ENCODE measurements at regions of chr3 and their contacts with region 1.

Region 1: DNA sequence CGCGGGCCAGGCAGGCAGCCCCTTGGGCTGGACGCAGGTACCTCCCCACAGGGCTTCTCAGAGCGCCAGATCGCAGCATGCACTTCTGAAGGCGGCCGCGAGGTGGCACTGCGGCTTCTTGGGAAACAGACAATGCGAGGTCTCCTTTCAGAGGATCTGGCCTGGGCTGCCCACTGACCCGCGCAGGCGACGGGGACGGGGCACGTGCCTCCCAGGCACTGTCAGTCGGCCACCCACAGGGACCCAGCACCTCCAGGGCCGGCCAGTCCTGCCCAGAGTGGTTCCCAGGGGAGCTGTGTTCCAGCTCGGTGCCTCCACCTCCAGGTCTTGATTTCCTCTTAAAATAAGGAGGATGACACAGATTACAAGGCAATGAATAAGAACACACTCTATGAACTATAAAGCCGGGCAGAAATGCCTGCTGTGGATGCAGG is 24.4 kb upstream of the TXNRD3 start:
- DNase-seq: peak; percentile 91
- ATAC-seq: peak; percentile 96

Region 2: DNA sequence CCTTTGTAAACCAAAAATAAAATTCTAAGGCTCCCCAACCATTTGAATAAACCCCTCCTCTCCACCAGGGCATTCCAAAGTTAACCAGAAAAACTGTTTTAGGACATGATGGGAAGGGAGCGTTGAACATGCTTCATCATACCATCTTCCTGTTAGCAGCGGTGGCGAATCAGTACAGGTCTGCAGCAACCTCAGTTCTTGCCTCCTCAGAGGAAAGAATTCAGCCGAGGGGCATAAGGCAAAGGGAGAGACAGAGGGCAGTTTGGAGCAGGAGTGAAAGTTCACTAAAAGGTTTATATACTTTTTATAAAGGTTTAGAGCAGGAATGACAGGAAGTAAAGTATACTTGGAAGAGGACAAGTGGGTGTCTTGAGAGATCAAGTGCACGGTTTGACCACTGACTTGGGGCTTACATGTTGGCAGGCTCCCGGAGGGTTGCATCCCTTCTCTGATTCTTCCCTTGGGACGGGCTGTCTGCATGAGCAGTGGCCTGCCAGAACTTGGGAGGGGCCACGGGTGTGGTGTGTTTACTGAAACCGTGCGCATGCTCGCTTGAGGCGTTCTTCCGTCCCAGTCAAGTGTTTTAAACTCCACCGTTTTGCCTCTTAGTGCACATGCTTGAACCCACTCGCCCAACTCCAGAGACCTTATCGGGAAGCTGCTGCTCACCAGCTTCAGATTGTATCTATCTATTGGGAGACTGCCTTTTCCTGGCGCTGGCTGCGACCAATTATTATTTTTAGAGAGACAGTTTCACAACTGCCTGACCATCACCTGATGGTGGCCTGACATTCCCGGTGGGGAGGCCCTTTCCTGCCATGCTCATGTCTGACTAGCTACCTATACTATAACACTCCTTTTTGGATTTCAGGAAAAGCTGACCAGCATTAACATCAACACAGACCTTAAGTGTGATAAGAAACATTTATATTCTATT is 105.9 kb before region 1 on chr3:
- intact Hi-C with region 1: no loop called
- DNase-seq: peak; percentile 46
- ATAC-seq: peak; percentile 61

Region 3: GRCh38 chr3:126630020-126630419 is 49.3 kb before region 1 on chr3:
- intact Hi-C with region 1: no loop called
- DNase-seq: no peak
- ATAC-seq: no peak

Region 4: DNA sequence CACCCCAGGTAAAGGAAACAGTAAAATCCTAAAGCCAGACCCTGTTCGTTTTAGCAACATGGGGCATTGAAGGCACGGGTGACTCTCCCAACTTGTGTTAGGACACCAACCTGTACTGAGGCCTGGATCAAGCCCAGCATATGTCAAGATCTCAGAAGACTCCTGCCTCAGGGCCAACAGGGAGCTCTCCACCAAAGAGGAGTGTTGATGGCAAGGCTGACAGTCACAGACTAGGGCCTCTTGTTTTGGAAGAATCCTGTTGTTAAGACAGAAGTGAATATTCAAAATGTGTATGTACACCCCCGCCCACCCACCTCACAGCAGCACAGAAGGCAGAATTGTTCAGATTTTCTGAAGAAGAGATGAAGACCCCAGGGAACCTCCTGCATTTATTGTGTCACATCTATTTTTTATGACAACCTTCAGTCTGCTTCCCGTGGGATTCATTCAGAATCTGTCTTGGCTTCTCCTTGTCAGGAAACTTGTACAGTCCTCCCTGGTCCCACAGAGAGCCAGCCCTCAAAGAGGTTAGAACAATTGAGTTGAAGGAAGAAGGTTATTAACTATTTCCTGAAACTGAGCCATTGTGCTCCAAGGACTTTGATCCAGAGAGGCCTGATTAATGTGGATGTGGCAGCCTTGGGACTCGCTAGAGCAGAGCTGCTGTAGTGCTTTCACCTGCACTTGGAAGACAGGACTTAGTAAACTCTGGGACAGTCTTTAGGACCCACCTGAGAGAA is 241.9 kb after region 1 on chr3:
- intact Hi-C with region 1: no loop called
- DNase-seq: no peak
- ATAC-seq: no peak

Region 5: DNA sequence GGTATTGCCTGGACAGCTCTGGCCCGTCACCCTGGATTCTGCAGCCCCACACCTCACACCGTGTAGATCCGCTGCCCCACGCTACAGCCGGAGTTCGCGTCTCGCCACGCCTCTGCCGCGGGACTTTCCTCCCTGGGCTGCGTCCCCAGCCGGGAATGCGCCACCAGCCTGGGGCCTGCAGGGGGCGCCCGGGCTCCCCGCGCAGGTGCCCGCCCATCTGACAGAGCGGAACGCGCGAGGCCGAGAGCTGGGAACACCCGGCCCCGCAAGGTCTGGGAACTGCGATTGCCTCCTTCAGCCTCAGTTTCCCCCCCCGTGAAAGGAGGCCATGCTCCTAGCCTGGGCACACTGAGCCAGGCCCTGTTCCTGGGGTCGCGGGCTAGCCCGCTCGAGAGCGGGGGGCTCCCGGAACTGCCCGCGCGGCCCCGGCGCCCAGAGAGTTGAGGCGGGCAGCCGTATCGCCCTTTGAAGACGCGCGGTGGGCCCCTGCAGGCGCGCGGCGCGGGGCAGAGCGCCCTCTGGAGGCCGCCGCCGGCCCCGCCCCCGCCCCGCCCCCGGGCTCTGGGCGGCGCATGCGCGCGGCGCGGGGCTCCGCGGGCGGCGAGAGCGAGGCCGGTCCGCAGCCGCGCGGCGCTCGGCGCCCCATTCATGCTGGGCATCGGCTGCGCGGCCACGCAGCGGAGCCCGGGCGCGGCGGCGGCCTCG is 303.3 kb after region 1 on chr3 and contains the start of gene PLXNA1:
- intact Hi-C with region 1: loop called (anchors 5 kb)
- DNase-seq: peak; percentile 89
- ATAC-seq: peak; percentile 88
- total RNA-seq, gene PLXNA1: 23.2 TPM

Region 6: DNA sequence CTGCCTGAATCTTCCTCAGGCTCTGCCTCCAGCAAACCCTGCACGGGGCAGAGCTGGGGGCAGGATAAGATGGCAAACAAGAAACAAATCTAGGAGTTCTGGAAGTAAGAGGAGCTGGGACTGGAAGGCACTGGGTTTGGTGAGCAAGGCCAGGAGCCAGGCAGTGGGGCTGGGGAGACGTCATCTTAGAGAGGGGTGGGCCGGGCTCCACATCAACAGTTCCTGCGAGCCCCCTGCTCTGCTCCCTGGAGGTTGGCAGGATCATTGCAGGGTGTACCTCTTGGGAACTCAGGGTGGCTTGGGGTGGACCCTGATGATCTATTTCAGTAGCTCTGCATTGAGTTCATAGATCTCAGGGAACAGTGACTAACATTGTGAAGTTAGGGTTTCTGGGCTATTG is 426.3 kb after region 1 on chr3:
- intact Hi-C with region 1: no loop called
- DNase-seq: no peak
- ATAC-seq: no peak

Region 7: DNA sequence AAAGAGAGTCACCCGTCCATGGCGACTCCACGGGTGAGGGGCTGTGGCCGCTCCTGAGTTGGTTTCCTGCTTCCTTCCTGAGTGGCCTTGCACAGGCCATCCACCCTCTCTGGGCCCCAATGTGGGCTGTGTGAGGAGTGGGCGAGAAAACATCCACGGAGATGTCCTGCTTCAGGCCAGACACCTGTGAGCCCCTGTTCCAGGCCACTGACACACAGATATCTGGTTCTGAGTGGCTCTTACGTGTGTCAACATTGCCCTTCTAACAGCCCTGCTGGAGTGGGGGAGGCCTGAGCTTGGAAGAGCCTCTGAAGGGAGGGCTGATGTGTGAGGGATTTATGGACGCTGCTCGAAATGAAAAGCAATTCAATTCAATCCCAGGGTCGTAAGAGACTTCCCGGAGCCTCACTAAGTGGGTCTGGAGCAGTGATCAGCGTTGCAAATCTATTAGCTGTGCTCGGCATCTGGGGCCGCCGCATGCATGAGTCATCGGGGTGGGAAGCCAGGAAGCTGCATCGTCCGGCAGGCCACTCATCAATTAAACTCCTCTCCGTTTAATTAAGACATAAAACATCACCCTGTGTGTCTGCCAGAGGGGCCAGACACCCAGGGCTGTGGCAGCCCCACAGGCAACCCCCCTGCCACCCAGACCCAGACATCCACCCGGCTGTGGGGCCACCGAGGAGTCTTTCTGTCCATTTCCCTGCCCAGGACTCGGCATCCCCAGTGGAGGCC is 493.6 kb after region 1 on chr3:
- intact Hi-C with region 1: loop called (anchors 5 kb)
- DNase-seq: no peak
- ATAC-seq: no peak

Region 8: DNA sequence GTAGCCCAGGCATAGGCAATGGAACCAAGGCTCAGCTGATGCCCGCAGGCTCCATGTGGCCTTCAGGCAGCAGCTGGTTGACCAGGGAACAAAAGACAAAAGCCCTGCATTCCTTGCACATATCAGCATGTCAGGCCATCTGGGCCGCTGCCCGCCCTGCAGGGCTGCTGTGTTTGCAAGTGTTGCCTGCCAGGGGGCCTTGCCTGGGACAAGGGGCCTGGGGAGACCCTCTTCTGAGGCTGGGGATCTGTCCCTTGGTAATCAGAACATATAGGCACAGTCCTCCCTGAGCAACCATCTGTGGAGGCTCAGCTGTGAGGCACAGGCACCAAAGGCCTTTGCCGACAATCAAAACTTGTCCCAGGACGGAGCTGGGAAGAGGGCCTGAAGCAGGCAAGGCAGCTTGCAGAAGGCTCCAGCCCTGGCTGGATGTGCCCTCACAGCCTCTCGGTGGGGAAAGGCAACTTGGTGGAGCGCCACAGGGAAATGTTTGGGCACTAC is 773.0 kb after region 1 on chr3:
- intact Hi-C with region 1: loop called (anchors 5 kb)
- DNase-seq: no peak
- ATAC-seq: no peak

Measured in Right ventricle myocardium superior (tissue), 1 donor.